ENCODE measurements at regions of chr14 and their contacts with region 1.

Region 1: GRCh38 chr14:77067632-77068514 is 30.2 kb upstream of the CIPC start:
- DNase-seq: peak; percentile 68
- ATAC-seq: peak; percentile 79
- H3K4me3 Mint-ChIP-seq: no peak overlapping the region
- H3K27ac Mint-ChIP-seq: no peak overlapping the region
- H3K4me1 Mint-ChIP-seq: no peaks in the 10 kb centered on the region
- H3K27me3 Mint-ChIP-seq: peaks cover 3% of the 10 kb centered on the region
- CTCF ChIP-seq: peak; percentile 83

Region 2: GRCh38 chr14:76887196-76887595 is 180.7 kb before region 1 on chr14:
- CTCF ChIA-PET with region 1: interaction called, 41 read pairs
- POLR2A ChIA-PET with region 1: interaction called, 3 read pairs
- intact Hi-C with region 1: no loop called
- DNase-seq: no peak
- ATAC-seq: no peak
- H3K4me3 Mint-ChIP-seq: no peak overlapping the region
- H3K27ac Mint-ChIP-seq: no peak overlapping the region
- H3K4me1 Mint-ChIP-seq: peaks cover 8% of the 10 kb centered on the region
- H3K27me3 Mint-ChIP-seq: no peaks in the 10 kb centered on the region
- CTCF ChIP-seq: no peak

Region 3: GRCh38 chr14:76918751-76919543 is 148.9 kb before region 1 on chr14:
- CTCF ChIA-PET with region 1: interaction called, 82 read pairs
- POLR2A ChIA-PET with region 1: no interaction called
- intact Hi-C with region 1: no loop called
- DNase-seq: peak; percentile 42
- ATAC-seq: no peak
- H3K4me3 Mint-ChIP-seq: peak overlapping the region; percentile 34
- H3K27ac Mint-ChIP-seq: peak overlapping the region; percentile 43
- H3K4me1 Mint-ChIP-seq: peaks cover 46% of the 10 kb centered on the region
- H3K27me3 Mint-ChIP-seq: no peaks in the 10 kb centered on the region
- CTCF ChIP-seq: no peak

Region 4: DNA sequence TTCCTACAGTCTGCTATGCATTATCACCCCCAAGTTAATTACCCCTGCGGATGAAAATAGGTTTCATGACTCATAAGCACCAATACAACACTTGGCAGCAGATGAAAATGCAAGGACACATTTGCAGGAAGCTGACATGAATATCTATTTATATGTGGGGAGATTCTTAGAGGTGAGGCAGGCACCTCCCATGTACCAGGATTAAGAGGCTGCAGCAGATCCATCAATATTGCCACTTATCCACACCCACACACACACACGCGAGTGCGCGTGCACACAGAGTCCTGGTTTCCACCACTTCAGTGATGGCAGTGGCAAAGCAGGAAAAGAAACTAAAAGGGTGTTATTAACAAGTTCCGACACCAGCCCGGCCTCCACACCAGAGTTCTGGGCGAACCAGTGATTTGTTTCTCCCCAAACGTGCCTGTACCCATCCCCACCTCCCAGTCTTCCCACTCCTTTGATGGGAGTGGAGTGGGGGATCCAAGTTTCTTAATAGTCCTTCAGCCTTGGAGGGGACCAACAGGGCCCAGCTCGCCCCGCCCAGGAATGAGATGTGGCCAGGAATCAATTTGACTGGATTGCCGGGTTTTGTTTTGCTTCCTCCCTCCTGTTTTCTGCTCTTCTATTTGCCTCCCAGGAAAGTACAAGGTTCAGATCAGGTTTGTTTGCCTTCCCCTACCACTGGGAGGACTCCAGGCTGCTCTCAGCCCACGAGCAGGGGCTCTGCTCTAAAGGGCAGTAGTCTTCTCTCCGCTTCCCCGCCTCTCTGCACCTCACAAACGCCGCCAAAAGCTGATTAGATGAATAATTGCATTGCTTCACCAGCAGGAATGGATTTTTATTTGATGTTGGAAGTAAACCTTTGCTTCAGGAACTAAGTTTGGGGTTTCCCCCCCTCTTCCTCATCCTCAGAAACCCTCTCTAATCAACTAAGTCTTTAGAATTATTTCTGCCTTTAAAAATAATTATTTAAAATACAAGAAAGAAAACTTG is 44.6 kb before region 1 on chr14:
- CTCF ChIA-PET with region 1: interaction called, 13 read pairs
- POLR2A ChIA-PET with region 1: no interaction called
- intact Hi-C with region 1: no loop called
- DNase-seq: peak; percentile 77
- ATAC-seq: peak; percentile 12
- H3K4me3 Mint-ChIP-seq: peak overlapping the region; percentile 13
- H3K27ac Mint-ChIP-seq: peak overlapping the region; percentile 44
- H3K4me1 Mint-ChIP-seq: peaks cover 46% of the 10 kb centered on the region
- H3K27me3 Mint-ChIP-seq: no peaks in the 10 kb centered on the region
- CTCF ChIP-seq: no peak

Region 5: DNA sequence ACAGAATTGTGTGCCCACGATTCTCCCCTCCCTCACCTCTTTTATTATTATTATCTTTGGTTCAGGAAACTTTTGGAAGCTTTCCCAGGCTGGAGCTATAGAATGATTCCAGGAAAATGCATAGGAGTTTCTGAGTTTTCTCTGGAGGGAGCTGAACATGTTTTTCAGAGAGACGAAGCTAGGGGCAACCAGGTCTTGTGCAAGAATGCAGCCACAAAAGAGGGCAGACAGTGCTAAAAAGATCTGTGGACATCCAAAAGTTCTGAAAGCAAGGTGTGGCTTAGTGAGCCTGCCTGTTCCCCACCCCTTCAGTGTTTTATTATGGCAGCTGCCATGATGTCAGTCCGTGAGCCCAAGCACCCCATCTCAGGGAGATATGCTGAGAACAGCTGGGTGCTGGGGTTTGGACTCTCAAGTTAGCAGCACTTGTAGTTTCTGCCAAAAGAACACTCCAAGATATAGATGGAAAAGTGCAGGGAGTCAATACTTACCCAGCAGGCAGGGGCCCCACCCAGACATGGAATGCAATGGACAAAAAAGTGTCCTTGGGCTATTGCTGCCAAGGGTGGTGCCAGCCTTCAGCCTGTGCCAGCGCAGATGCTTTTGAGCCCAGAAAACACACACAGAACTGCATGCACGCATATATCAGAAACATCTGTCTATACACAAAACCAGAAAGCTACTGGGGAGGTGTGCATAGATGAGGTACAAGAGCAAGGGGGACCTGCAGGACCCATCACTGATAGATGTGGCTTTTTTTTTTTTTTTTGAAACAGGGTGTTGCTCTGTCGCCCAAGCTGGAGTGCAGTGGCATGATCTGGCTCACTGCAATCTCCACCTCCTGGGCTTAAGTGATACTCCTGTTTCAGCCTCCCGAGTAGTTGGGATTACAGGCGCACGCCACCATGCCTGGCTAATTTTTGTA is 22.4 kb before region 1 on chr14:
- CTCF ChIA-PET with region 1: interaction called, 12 read pairs
- POLR2A ChIA-PET with region 1: no interaction called
- intact Hi-C with region 1: no loop called
- DNase-seq: no peak
- ATAC-seq: no peak
- H3K4me3 Mint-ChIP-seq: no peak overlapping the region
- H3K27ac Mint-ChIP-seq: no peak overlapping the region
- H3K4me1 Mint-ChIP-seq: peaks cover 48% of the 10 kb centered on the region
- H3K27me3 Mint-ChIP-seq: no peaks in the 10 kb centered on the region
- CTCF ChIP-seq: no peak

Region 6: DNA sequence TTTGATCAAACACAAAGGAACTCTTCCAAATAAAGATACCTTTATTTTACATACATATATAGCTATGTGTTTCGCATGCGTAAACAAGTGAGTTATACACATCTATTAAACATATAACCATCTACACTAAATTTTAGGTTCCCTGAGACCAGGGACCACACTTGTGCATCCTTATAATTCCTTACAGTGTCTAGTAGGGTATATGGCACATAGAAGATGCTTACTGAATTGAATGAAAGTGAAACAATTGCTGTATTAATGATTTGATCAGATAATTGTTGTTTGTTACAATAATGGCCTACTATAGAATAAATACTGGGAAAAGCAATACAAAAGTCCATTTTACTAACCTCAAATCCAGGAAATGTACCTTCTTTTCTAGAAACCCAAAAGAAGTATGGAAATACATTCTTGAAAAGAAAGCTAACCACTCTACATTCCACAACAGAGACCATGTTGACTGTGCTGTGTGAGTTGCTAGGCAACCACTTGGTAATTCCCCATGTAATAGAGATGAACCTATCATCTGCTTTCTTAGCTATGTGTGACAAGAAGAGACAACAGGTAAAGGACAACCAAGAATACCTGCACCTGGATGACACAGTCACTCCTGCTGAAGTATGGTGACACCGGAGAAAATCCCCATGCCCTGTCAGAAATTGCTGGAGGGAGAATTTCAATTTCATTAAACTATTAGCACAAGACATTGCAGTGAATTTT is 18.3 kb after region 1 on chr14:
- CTCF ChIA-PET with region 1: interaction called, 122 read pairs
- POLR2A ChIA-PET with region 1: no interaction called
- intact Hi-C with region 1: no loop called
- DNase-seq: no peak
- ATAC-seq: peak; percentile 60
- H3K4me3 Mint-ChIP-seq: no peak overlapping the region
- H3K27ac Mint-ChIP-seq: no peak overlapping the region
- H3K4me1 Mint-ChIP-seq: peaks cover 5% of the 10 kb centered on the region
- H3K27me3 Mint-ChIP-seq: no peaks in the 10 kb centered on the region
- CTCF ChIP-seq: no peak

Region 7: DNA sequence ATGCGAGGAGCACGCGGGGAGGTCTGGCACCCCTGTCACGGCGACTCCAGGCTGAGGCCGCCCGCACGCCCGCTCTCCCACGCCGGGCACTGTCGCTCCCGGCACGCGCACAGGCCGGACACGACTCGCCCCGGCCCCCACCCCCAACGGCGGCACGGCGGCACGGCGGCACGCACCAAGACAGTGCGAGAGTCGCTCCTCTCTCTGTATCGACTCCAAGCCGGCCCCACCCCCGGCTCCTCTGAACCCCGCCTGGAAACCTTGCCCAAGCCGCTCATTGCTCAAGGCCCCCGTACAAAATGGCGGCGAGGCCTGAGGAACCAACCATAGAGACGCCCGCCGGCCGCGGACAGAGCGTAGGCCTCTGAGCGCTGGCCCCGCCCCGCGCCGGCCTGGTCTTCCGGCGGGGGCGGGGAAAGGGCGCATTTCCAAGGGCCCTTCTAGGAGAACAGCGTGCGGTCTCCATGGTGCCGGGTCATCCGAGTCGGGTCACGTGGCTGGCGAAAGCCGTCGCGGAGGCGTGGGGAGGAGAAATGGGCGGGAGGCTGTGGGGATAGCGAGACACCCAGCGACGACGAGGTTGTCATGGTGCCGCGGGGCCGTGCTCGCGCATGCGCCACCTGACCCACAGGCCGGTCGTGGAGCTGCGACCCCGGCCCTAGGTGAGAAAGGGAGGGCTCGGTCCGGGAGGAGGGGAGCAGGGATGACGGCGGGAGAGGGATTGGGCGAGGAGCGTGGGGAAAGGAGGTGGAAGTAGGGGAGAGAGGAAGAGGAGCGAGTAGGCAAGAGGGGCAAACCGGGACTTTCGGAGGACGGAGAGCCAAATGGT is 30.0 kb after region 1 on chr14 and contains the start of gene CIPC:
- CTCF ChIA-PET with region 1: interaction called, 52 read pairs
- POLR2A ChIA-PET with region 1: interaction called, 4 read pairs
- intact Hi-C with region 1: no loop called
- DNase-seq: peak; percentile 99
- ATAC-seq: peak; percentile 94
- H3K4me3 Mint-ChIP-seq: peak within 1 kb of the TSS; percentile 93
- H3K27ac Mint-ChIP-seq: peak within 1 kb of the TSS; percentile 99
- H3K4me1 Mint-ChIP-seq: peaks cover 35% of the 10 kb centered on the region
- H3K27me3 Mint-ChIP-seq: no peaks in the 10 kb centered on the region
- CTCF ChIP-seq: no peak
- total RNA-seq, gene CIPC: 8.8 to 9.6 TPM

Region 8: GRCh38 chr14:77151918-77152588 is 84.2 kb after region 1 on chr14:
- CTCF ChIA-PET with region 1: no interaction called
- POLR2A ChIA-PET with region 1: no interaction called
- intact Hi-C with region 1: no loop called
- DNase-seq: no peak
- ATAC-seq: peak; percentile 67
- H3K4me3 Mint-ChIP-seq: no peak overlapping the region
- H3K27ac Mint-ChIP-seq: no peak overlapping the region
- H3K4me1 Mint-ChIP-seq: no peaks in the 10 kb centered on the region
- H3K27me3 Mint-ChIP-seq: peaks cover 21% of the 10 kb centered on the region
- CTCF ChIP-seq: no peak

Measured in activated CD8-positive, alpha-beta T cell treated with anti-CD3 and anti-CD28 coated beads for 36 hours (primary cell).